Mucosa of descending colon (tissue), 3 donors: ENCODE measurements at regions of chr4 and their contacts with region 1.

Region 1: DNA sequence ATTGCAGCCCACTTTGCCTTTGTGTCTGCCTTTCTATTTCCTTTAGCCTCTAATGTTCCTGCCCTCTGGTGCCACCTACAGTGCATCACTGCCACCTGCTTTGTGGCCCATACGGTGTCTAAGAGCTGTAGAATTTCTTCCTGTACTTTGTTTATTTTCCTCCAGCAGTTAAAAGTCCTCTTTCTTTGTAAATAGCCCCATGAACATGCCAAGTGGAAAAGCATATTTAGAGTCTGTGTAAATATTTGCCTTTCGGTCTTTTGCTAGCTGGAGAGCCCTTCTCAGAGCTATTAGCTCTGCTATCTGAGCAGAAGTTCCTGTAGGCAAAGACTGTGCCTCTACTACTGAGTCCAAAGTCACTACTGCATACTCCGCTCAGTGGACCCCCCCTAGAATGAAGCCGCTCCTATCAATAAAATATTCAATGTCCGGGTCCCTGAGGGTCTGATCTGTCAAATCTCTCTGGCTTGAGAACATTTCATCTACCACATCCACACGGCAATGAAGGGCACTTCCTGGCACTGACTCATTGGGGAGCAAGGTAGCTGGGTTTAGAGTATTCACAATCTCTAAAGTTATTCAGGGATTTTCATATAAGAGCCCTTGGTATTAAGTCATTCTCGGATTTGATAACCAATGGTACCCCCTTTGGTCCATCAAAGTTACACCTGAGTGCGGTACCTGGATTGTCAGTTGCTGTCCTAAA is 36.3 kb downstream of the SULT1E1 start:
- DNase-seq: peak; percentile 72 to 88 (median 83)
- ATAC-seq: peak; percentile 98
- H3K4me3 ChIP-seq: no peak overlapping the region
- H3K4me1 ChIP-seq: peaks cover 8% of the 10 kb centered on the region
- CTCF ChIP-seq: no peak

Region 2: GRCh38 chr4:69749771-69750170 is 73.9 kb before region 1 on chr4:
- intact Hi-C with region 1: loop called in 1 of 2 experiments (anchors 10 kb)
- DNase-seq: no peak
- ATAC-seq: no peak
- H3K4me3 ChIP-seq: no peak overlapping the region
- H3K4me1 ChIP-seq: no peaks in the 10 kb centered on the region
- CTCF ChIP-seq: no peak

Region 3: GRCh38 chr4:69787879-69788278 is 35.8 kb before region 1 on chr4:
- intact Hi-C with region 1: no loop called
- DNase-seq: no peak
- ATAC-seq: no peak
- H3K4me3 ChIP-seq: no peak overlapping the region
- H3K4me1 ChIP-seq: no peaks in the 10 kb centered on the region
- CTCF ChIP-seq: no peak

Region 4: DNA sequence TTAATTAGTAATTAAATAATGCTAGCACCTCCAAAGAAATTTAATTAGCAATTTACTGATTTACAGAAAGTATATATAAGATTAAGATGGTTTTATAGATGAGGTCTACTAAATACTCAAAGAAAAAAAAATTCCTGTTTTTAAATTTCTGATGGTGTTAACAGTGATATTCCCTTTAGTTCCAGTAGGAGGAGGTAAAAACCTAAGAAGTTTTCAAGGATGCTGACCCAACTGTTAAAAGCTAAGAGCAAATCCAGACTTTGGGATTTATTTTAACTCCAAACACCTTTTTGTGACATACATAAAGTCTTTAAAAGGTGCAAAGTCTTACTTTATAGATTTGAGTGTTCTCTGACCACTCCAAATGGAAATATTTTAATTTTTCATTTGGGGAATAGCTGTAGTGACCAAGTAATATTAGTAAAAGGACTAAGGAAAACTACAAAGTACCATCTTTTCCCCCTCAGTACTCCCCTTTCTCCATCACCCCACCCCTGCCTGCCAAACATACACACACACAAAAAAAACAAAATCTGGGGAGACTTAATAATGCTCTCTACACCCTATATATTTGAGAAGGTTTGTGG is 73.0 kb after region 1 on chr4:
- intact Hi-C with region 1: no loop called
- DNase-seq: no peak
- ATAC-seq: no peak
- H3K4me3 ChIP-seq: no peak overlapping the region
- H3K4me1 ChIP-seq: no peaks in the 10 kb centered on the region
- CTCF ChIP-seq: peak; percentile 18